T-cell (primary cell): ENCODE measurements at regions of chr19 and their contacts with region 1.

Region 1: GRCh38 chr19:8001995-8002849 is 3.2 kb downstream of the ELAVL1 start:
- DNase-seq: peak; percentile 10 to 80 (median 55)
- ATAC-seq: peak; percentile 27 to 40 (median 38)
- H3K4me3 ChIP-seq: peak overlapping the region; percentile 18 to 48
- H3K4me3 Mint-ChIP-seq: peak overlapping the region; percentile 62 to 89 (median 71)
- H3K27ac ChIP-seq: peak overlapping the region; percentile 17
- H3K27ac Mint-ChIP-seq: peak overlapping the region; percentile 73 to 82
- H3K4me1 ChIP-seq: peaks cover 10 to 70% of the 10 kb centered on the region in 2 experiments
- H3K4me1 Mint-ChIP-seq: peaks cover 55 to 64% (median 58%) of the 10 kb centered on the region in 3 donors
- H3K27me3 ChIP-seq: no peaks in the 10 kb centered on the region
- H3K27me3 Mint-ChIP-seq: no peaks in the 10 kb centered on the region

Region 2: GRCh38 chr19:7961921-7962626 is 40.1 kb before region 1 on chr19:
- CTCF ChIA-PET with region 1: no interaction called
- POLR2A ChIA-PET with region 1: no interaction called
- DNase-seq: no peak
- ATAC-seq: no peak
- H3K4me3 ChIP-seq: no peak overlapping the region
- H3K4me3 Mint-ChIP-seq: no peak overlapping the region
- H3K27ac ChIP-seq: no peak overlapping the region
- H3K27ac Mint-ChIP-seq: no peak overlapping the region
- H3K4me1 ChIP-seq: no peaks in the 10 kb centered on the region
- H3K4me1 Mint-ChIP-seq: no peaks in the 10 kb centered on the region
- H3K27me3 ChIP-seq: no peaks in the 10 kb centered on the region
- H3K27me3 Mint-ChIP-seq: no peaks in the 10 kb centered on the region

Region 3: GRCh38 chr19:7986321-7987083 is 15.7 kb before region 1 on chr19:
- CTCF ChIA-PET with region 1: no interaction called
- POLR2A ChIA-PET with region 1: no interaction called
- DNase-seq: no peak
- ATAC-seq: no peak
- H3K4me3 ChIP-seq: no peak overlapping the region
- H3K4me3 Mint-ChIP-seq: no peak overlapping the region
- H3K27ac ChIP-seq: no peak overlapping the region
- H3K27ac Mint-ChIP-seq: no peak overlapping the region
- H3K4me1 ChIP-seq: no peaks in the 10 kb centered on the region
- H3K4me1 Mint-ChIP-seq: peaks cover 2 to 19% (median 7%) of the 10 kb centered on the region in 3 donors
- H3K27me3 ChIP-seq: no peaks in the 10 kb centered on the region
- H3K27me3 Mint-ChIP-seq: no peaks in the 10 kb centered on the region

Region 4: DNA sequence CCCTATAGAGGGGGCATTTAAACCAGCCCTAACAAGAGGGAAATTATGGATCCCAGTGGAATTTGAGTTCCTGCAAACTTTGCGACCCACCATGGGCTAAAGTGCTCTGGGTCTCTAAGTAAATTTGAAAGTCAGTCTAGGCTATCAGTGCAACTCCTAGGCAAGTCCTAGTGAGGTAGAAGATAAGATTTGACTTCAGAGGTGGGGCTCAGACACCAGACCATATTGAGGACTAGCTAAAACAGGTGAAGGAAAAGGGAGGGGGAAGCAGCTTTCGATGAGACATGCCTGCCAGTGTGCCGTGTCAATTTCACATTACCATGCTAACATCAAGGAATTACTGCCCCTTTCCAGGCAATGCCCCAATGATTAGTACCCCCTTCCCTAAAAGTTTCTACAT is 267.5 kb after region 1 on chr19:
- CTCF ChIA-PET with region 1: interaction called in 1 of 2 experiments, 12 read pairs
- POLR2A ChIA-PET with region 1: no interaction called
- DNase-seq: no peak
- ATAC-seq: no peak
- H3K4me3 ChIP-seq: peak overlapping the region in 1 of 2 donors; percentile 78
- H3K4me3 Mint-ChIP-seq: peak overlapping the region; percentile 82 to 93 (median 90)
- H3K27ac ChIP-seq: peak overlapping the region; percentile 86
- H3K27ac Mint-ChIP-seq: peak overlapping the region; percentile 91 to 96
- H3K4me1 ChIP-seq: peaks cover 3 to 12% of the 10 kb centered on the region in 2 experiments
- H3K4me1 Mint-ChIP-seq: peaks cover 11 to 14% (median 13%) of the 10 kb centered on the region in 3 donors
- H3K27me3 ChIP-seq: no peaks in the 10 kb centered on the region
- H3K27me3 Mint-ChIP-seq: no peaks in the 10 kb centered on the region